Ovary (tissue), 10 donors: ENCODE measurements at regions of chr1 and their contacts with region 1.

Region 1: GRCh38 chr1:11550664-11551283 is 71.8 kb downstream of the DISP3 start:
- DNase-seq: peak in 4 of 5 donors; percentile 48 to 75 (median 61)
- H3K4me3 ChIP-seq: no peak overlapping the region
- H3K27ac ChIP-seq: no peak overlapping the region
- H3K4me1 ChIP-seq: no peaks in the 10 kb centered on the region
- H3K27me3 ChIP-seq: no peaks in the 10 kb centered on the region
- CTCF ChIP-seq: no peak
- EP300 ChIP-seq: no peak
- POLR2A ChIP-seq: no peak

Region 2: DNA sequence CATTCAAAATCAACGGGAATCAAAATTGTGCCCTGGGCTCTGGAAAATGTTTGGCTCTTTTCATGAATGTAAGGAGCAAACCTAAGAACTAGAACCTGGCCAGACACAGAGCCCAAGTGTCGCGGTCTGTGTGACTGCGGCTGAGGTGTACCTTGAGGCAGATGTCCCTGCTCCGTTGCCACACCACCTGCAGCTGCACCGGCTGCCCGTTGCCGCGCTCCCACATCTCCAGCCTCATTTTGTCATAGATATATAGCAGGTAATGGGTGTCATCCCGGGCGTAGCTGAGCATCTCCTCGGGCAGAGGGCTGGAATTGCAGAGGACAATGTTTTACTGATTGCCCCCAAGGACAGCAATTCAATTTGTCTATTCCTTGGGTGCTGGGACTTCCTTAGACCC is 469.8 kb before region 1 on chr1:
- intact Hi-C with region 1: loop called in 1 of 4 experiments (anchors 10 kb)
- DNase-seq: no peak
- H3K4me3 ChIP-seq: no peak overlapping the region
- H3K27ac ChIP-seq: no peak overlapping the region
- H3K4me1 ChIP-seq: no peaks in the 10 kb centered on the region
- H3K27me3 ChIP-seq: no peaks in the 10 kb centered on the region
- CTCF ChIP-seq: no peak
- EP300 ChIP-seq: no peak
- POLR2A ChIP-seq: no peak